CD8-positive, alpha-beta memory T cell (primary cell): ENCODE measurements at regions of chr7 and their contacts with region 1.

Region 1: DNA sequence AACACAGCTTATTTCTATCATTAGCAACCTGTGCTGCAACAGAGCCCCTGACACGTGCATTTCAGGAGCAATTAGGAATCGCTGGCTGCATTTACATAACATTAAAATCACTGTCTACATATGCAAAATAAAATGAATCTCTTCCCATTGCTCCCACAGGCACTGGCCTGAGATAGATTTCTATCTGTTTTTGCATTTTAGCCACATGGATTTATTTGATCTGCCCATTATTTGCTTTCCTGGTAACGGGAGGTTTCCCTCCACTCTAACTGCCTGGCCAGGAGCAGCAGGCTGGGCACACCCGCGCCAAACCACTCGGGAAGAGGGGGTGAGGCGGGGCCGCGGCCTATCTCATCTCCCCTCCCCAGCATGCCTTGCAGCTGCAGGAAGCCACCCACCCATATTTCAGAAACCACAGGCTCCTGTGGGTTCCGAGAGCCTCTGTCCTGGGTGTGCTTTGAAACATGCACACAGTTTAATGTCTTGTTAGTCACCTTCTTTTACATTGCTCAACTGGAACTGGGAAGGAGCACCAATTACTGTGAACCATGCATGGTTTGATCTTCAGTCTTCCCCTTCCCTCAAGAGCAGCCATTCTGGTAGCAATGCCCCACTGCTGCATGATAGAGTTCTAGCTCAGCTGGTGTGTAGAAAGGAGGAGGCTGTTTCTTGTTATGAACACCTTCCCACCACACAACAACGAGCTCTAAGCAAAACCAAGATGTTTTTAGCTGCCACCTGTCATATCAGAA is 37.7 kb upstream of the IKZF1 start:
- DNase-seq: peak; percentile 52 to 90 (median 85)
- H3K4me3 ChIP-seq: peak overlapping the region; percentile 54
- H3K4me3 Mint-ChIP-seq: peak overlapping the region; percentile 75 to 87 (median 80)
- H3K27ac ChIP-seq: peak overlapping the region; percentile 22
- H3K27ac Mint-ChIP-seq: peak overlapping the region; percentile 88 to 98 (median 93)
- H3K4me1 ChIP-seq: peaks cover 98% of the 10 kb centered on the region
- H3K4me1 Mint-ChIP-seq: peaks cover 94 to 100% (median 98%) of the 10 kb centered on the region in 3 donors
- H3K27me3 ChIP-seq: no peaks in the 10 kb centered on the region
- H3K27me3 Mint-ChIP-seq: no peaks in the 10 kb centered on the region

Region 2: GRCh38 chr7:49597805-49598204 is 669.0 kb before region 1 on chr7:
- CTCF ChIA-PET with region 1: no interaction called
- POLR2A ChIA-PET with region 1: no interaction called
- DNase-seq: no peak
- H3K4me3 ChIP-seq: no peak overlapping the region
- H3K4me3 Mint-ChIP-seq: no peak overlapping the region
- H3K27ac ChIP-seq: no peak overlapping the region
- H3K27ac Mint-ChIP-seq: peak overlapping the region in 1 of 8 donors; percentile 15
- H3K4me1 ChIP-seq: no peaks in the 10 kb centered on the region
- H3K4me1 Mint-ChIP-seq: no peaks in the 10 kb centered on the region
- H3K27me3 ChIP-seq: no peaks in the 10 kb centered on the region
- H3K27me3 Mint-ChIP-seq: peaks cover 0 to 1% of the 10 kb centered on the region in 2 donors

Region 3: GRCh38 chr7:50281680-50282445 is 15.1 kb after region 1 on chr7:
- CTCF ChIA-PET with region 1: interaction called, 10 read pairs
- POLR2A ChIA-PET with region 1: interaction called, 4 read pairs
- DNase-seq: peak in 1 of 5 donors; percentile 47
- H3K4me3 ChIP-seq: peak overlapping the region; percentile 40
- H3K4me3 Mint-ChIP-seq: peak overlapping the region; percentile 32 to 75 (median 51)
- H3K27ac ChIP-seq: no peak overlapping the region
- H3K27ac Mint-ChIP-seq: peak overlapping the region; percentile 25 to 89 (median 68)
- H3K4me1 ChIP-seq: peaks cover 46% of the 10 kb centered on the region
- H3K4me1 Mint-ChIP-seq: peaks cover 33 to 64% (median 50%) of the 10 kb centered on the region in 3 donors
- H3K27me3 ChIP-seq: no peaks in the 10 kb centered on the region
- H3K27me3 Mint-ChIP-seq: no peaks in the 10 kb centered on the region

Region 4: DNA sequence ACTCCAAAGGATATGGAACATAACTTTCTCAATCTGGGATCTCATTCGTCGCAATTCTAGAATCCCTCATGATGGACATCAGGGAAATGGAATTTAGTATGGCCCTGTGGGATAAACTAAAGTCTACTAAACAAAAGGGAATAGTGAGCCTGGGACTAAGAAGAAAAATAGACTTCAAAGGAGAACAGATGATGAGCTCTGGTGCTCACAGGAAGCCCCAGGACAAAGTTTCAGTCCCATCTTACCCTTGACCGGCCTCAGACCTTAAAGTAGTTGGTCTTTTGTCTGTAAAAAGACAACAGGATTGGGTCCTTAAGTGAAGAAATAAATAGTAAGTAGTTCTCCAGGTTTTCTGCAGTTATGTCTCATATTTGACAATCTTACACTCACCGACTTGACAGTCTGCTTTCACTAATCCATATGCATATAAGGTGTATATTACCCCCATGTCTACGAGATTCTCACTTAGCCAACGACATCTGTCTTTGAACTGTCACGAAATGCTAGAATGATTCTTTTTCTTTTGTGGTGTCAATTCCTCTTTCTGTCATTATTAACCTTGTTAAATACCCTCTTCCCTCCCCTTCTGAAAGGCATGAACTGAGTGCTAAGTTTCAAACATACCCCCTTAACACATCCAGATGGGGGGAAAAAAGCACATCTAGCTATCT is 26.8 kb after region 1 on chr7:
- CTCF ChIA-PET with region 1: interaction called, 12 read pairs
- POLR2A ChIA-PET with region 1: no interaction called
- DNase-seq: no peak
- H3K4me3 ChIP-seq: no peak overlapping the region
- H3K4me3 Mint-ChIP-seq: no peak overlapping the region
- H3K27ac ChIP-seq: no peak overlapping the region
- H3K27ac Mint-ChIP-seq: peak overlapping the region in 1 of 8 donors; percentile 20
- H3K4me1 ChIP-seq: no peaks in the 10 kb centered on the region
- H3K4me1 Mint-ChIP-seq: peaks cover 8 to 39% (median 35%) of the 10 kb centered on the region in 3 donors
- H3K27me3 ChIP-seq: no peaks in the 10 kb centered on the region
- H3K27me3 Mint-ChIP-seq: peaks cover 0 to 2% of the 10 kb centered on the region in 2 donors

Region 5: DNA sequence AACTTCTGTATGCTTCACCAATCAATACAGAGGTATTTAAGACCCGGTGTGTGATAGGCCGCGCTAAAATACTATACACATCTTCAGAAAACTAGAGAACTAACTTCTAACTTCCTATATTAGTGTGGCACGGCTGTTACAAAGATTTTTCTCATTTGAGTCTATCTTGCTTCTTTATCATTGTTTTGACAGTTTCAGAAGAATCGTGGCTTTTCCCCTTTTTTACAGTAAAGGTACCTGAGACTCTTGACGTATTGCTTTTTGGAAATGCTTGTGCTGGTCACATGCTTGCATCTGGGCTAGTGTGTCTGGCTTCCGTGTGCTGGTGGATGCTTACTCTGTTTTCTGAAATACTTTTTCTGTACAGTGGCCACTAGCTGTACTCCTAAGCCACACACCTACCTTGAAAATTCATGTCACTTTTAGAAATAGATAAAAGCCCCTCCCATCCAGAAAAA is 50.4 kb after region 1 on chr7:
- CTCF ChIA-PET with region 1: interaction called, 12 read pairs
- POLR2A ChIA-PET with region 1: interaction called, 3 read pairs
- DNase-seq: peak in 3 of 5 donors; percentile 74 to 85 (median 74)
- H3K4me3 ChIP-seq: peak overlapping the region; percentile 57
- H3K4me3 Mint-ChIP-seq: peak overlapping the region; percentile 79 to 100 (median 98)
- H3K27ac ChIP-seq: peak overlapping the region; percentile 66
- H3K27ac Mint-ChIP-seq: peak overlapping the region; percentile 92 to 99 (median 98)
- H3K4me1 ChIP-seq: peaks cover 98% of the 10 kb centered on the region
- H3K4me1 Mint-ChIP-seq: peaks cover 95 to 100% (median 99%) of the 10 kb centered on the region in 3 donors
- H3K27me3 ChIP-seq: no peaks in the 10 kb centered on the region
- H3K27me3 Mint-ChIP-seq: no peaks in the 10 kb centered on the region

Region 6: GRCh38 chr7:50349963-50350944 is 83.4 kb after region 1 on chr7:
- CTCF ChIA-PET with region 1: interaction called, 3 read pairs
- POLR2A ChIA-PET with region 1: interaction called, 11 read pairs
- DNase-seq: peak in 4 of 5 donors; percentile 46 to 80 (median 58)
- H3K4me3 ChIP-seq: peak overlapping the region; percentile 44
- H3K4me3 Mint-ChIP-seq: peak overlapping the region; percentile 59 to 90 (median 68)
- H3K27ac ChIP-seq: peak overlapping the region; percentile 73
- H3K27ac Mint-ChIP-seq: peak overlapping the region in 7 of 8 donors; percentile 92 to 100 (median 96)
- H3K4me1 ChIP-seq: peaks cover 97% of the 10 kb centered on the region
- H3K4me1 Mint-ChIP-seq: peaks cover 97 to 100% (median 100%) of the 10 kb centered on the region in 3 donors
- H3K27me3 ChIP-seq: no peaks in the 10 kb centered on the region
- H3K27me3 Mint-ChIP-seq: no peaks in the 10 kb centered on the region

Region 7: DNA sequence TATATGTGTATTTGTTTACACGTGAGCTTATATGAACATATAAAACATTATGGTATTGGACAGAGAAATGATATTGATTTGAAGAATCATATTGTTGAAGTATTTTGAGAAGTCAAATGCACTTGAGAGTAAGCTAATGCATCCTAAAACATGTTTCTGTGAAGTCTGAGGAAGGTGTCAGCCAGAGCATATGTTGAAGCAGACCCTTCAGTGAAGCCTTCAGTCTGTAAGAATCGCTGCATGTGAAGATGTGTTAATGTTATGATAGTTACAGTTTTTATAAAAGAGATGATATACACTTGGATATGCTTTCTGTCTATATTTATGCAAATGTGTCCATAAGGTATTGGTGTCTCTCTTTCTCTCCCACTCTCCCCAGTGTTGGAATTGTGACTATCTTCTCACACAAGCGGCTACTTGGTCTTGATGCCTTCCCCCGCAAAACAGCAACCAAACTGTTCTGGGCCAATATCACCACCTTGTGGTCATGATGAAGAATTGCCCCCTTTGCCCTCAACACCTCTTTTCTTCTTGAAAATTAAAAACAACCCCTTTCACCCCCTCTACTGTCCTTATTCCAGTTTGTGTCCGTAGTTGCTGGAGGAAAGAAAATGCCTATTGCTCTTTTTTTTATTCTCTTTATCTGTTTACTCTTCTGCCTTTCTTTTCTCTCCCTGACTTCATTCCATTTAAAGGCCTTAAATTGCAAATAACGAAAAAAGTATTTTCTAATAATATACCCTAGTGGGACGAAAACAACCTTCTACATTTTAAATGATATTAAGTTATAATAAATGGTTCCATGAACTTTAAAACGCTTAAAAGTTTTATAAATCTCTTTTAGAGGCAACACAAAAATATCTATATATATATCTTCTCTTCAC is 102.6 kb after region 1 on chr7:
- CTCF ChIA-PET with region 1: interaction called, 15 read pairs
- POLR2A ChIA-PET with region 1: interaction called, 3 read pairs
- DNase-seq: peak in 4 of 5 donors; percentile 44 to 82 (median 72)
- H3K4me3 ChIP-seq: peak overlapping the region; percentile 27
- H3K4me3 Mint-ChIP-seq: peak overlapping the region; percentile 7 to 72 (median 62)
- H3K27ac ChIP-seq: no peak overlapping the region
- H3K27ac Mint-ChIP-seq: peak overlapping the region in 7 of 8 donors; percentile 87 to 100 (median 93)
- H3K4me1 ChIP-seq: peaks cover 97% of the 10 kb centered on the region
- H3K4me1 Mint-ChIP-seq: peaks cover 94 to 100% (median 98%) of the 10 kb centered on the region in 3 donors
- H3K27me3 ChIP-seq: no peaks in the 10 kb centered on the region
- H3K27me3 Mint-ChIP-seq: no peaks in the 10 kb centered on the region